ENCODE measurements at regions of chr7 and their contacts with region 1.

Region 1: GRCh38 chr7:22110227-22110839 is 164.6 kb upstream of the CDCA7L start:
- DNase-seq: peak; percentile 55
- H3K4me3 Mint-ChIP-seq: no peak overlapping the region
- H3K27ac Mint-ChIP-seq: no peak overlapping the region
- H3K4me1 Mint-ChIP-seq: peaks cover 5% of the 10 kb centered on the region
- H3K27me3 Mint-ChIP-seq: no peaks in the 10 kb centered on the region

Region 2: GRCh38 chr7:22184549-22185199 is 74.3 kb after region 1 on chr7:
- intact Hi-C with region 1: loop called (anchors 5 kb)
- DNase-seq: no peak
- H3K4me3 Mint-ChIP-seq: no peak overlapping the region
- H3K27ac Mint-ChIP-seq: no peak overlapping the region
- H3K4me1 Mint-ChIP-seq: peaks cover 17% of the 10 kb centered on the region
- H3K27me3 Mint-ChIP-seq: peaks cover 13% of the 10 kb centered on the region

Region 3: DNA sequence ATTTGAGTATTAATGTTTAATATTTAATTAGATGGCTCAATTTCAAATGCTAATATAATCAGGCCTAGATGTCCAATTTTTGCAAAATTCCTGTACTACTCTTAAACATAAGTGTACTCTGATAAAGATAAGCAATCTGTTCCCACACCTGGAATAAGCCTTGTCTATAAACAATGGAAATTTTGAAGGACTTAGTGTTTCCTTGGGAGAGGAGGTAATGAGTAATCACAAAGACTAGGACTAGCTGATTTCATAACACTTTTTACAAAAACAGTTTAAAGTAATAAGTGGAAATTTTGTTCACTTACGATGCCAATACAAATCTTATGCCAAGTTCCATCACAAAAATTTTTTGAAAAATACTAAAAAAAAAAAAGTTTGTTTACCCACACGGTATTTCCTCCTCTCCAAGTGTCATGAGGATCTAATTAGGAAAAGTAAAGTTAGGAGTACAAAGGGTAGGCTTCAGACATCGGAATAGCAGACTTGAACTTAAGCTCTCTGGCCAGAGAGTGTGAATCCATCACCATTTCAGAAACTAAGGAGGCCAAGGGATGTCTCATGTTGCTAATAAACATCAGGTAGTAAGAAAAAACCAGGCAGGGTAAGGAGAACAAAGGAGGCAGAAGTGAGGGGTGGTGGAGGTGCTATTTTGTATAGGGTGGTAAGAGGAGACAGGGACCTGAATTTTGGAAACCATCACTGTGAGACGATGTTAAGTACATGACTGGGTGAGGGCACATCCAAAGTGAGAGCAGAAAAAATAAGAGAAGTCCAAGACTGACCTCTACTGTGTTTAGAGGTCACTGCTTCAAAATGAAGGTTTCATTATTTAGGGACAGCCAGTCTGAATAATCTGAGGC is 185.3 kb after region 1 on chr7:
- intact Hi-C with region 1: loop called (anchors 10 kb)
- DNase-seq: no peak
- H3K4me3 Mint-ChIP-seq: no peak overlapping the region
- H3K27ac Mint-ChIP-seq: no peak overlapping the region
- H3K4me1 Mint-ChIP-seq: no peaks in the 10 kb centered on the region
- H3K27me3 Mint-ChIP-seq: peaks cover 7% of the 10 kb centered on the region

Region 4: DNA sequence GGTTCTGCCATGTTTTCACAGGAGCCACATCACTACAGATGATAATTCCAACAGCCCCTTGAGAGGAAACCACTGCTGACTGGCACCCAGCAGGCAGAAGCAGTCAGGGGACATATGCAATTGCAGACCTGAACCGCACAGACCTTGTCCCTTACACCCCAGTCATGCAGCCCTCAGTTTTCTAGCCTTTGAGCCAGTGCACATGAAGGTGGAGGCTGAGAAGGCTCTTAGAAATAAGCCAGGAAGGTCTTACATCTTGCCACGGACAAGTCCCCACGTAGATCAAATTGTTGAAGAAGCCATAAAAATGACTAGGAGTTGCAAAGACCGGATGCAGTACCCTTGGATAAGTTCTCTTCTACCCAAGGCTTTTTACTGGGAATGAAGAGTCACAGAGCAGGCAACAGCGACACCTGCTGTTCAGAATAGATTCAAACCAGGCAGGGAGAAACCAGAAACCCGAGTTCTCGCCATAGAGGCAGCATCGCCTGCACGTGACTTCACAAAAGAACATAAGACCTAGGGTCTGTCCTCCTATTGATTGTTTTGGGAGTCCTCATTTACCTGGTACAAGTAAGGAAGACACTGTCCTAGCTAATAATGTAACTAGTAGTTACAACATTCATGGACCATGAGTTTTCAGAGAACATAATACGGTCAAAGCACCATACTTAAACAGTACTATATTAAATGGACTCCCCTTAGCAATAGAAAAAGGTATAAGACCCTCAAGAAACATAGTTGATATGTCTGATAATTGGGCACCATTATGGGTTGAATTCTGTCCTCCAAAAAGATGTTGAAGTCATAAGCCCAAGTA is 378.5 kb after region 1 on chr7:
- intact Hi-C with region 1: loop called (anchors 1 kb)
- DNase-seq: peak; percentile 28
- H3K4me3 Mint-ChIP-seq: no peak overlapping the region
- H3K27ac Mint-ChIP-seq: no peak overlapping the region
- H3K4me1 Mint-ChIP-seq: peaks cover 7% of the 10 kb centered on the region
- H3K27me3 Mint-ChIP-seq: peaks cover 13% of the 10 kb centered on the region

Region 5: DNA sequence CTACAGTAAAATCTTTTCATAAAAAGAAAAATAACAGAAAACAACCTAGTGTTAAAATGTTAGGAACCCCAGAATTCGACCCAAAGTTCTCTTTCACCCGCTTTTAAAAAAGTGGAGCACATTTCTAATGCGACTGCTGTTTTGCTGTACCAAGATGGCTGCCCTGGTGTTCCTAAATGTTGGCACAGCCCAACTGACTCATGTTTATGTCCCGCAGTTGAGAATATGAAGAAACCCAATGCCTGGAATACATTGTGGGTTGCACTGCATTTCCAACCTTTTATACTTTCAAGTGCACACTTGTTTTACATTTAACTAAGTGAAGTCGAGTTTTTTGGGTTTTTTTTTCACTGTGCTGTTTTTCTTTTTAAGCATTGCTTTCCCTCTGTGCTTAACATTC is 388.7 kb after region 1 on chr7:
- intact Hi-C with region 1: loop called (anchors 1 kb)
- DNase-seq: no peak
- H3K4me3 Mint-ChIP-seq: no peak overlapping the region
- H3K27ac Mint-ChIP-seq: no peak overlapping the region
- H3K4me1 Mint-ChIP-seq: peaks cover 4% of the 10 kb centered on the region
- H3K27me3 Mint-ChIP-seq: peaks cover 24% of the 10 kb centered on the region

Region 6: DNA sequence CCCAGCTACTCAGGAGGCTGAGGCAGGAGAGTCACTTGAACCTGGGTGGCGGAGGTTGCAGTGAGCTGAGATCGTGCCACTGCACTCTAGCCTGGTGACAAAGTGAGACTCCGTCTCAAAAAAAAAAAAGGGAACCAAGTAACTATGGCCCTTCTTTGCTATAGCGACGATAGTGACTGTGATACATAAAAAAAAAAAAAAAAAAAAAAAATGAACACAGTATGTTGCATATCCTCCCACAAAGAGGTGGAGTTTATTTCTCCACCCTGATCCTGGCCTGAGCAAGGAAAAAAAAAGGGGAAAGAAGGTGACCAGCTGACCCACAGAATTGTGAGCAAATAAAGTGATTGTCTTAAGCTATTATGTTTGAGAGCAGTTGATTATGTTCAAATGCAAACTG is 431.9 kb after region 1 on chr7:
- intact Hi-C with region 1: no loop called
- DNase-seq: no peak
- H3K4me3 Mint-ChIP-seq: no peak overlapping the region
- H3K27ac Mint-ChIP-seq: no peak overlapping the region
- H3K4me1 Mint-ChIP-seq: peaks cover 4% of the 10 kb centered on the region
- H3K27me3 Mint-ChIP-seq: peaks cover 37% of the 10 kb centered on the region

Region 7: GRCh38 chr7:22814261-22815208 is 704.2 kb after region 1 on chr7:
- intact Hi-C with region 1: loop called (anchors 5 kb)
- DNase-seq: no peak
- H3K4me3 Mint-ChIP-seq: no peak overlapping the region
- H3K27ac Mint-ChIP-seq: no peak overlapping the region
- H3K4me1 Mint-ChIP-seq: peaks cover 23% of the 10 kb centered on the region
- H3K27me3 Mint-ChIP-seq: no peaks in the 10 kb centered on the region